ENCODE measurements at regions of chrX and their contacts with region 1.

Region 1: GRCh38 chrX:13167481-13168231 is 123.2 kb upstream of the FAM9C start:
- DNase-seq: peak; percentile 62
- H3K4me3 Mint-ChIP-seq: peak overlapping the region; percentile 56
- H3K27ac Mint-ChIP-seq: peak overlapping the region; percentile 79
- H3K4me1 Mint-ChIP-seq: peaks cover 19% of the 10 kb centered on the region
- H3K27me3 Mint-ChIP-seq: no peaks in the 10 kb centered on the region

Region 2: DNA sequence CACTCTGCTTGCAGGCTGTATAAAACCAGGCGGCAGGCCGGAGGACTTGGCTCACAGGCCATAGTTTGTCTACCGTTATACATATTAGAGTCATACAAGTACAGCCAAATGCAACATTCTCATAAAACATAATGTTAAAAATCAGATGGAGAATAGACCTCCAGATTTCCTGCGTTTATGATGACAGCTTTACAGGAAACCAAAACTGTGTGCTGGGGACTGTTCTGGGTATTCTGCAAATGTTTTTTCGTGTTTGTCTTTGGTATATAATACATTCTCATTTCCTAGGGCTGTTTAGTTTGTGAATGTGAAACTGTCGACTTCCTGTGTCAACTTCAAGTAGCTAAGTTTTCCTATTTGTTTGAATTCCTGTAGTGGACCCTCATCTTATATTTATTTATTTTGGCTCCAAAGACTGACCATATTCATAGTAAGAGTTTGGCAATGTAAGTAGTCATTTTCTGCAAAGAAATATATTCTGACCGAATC is 43.8 kb before region 1 on chrX:
- intact Hi-C with region 1: loop called (anchors 5 kb)
- DNase-seq: peak; percentile 67
- H3K4me3 Mint-ChIP-seq: peak overlapping the region; percentile 63
- H3K27ac Mint-ChIP-seq: peak overlapping the region; percentile 87
- H3K4me1 Mint-ChIP-seq: peaks cover 38% of the 10 kb centered on the region
- H3K27me3 Mint-ChIP-seq: no peaks in the 10 kb centered on the region

Region 3: DNA sequence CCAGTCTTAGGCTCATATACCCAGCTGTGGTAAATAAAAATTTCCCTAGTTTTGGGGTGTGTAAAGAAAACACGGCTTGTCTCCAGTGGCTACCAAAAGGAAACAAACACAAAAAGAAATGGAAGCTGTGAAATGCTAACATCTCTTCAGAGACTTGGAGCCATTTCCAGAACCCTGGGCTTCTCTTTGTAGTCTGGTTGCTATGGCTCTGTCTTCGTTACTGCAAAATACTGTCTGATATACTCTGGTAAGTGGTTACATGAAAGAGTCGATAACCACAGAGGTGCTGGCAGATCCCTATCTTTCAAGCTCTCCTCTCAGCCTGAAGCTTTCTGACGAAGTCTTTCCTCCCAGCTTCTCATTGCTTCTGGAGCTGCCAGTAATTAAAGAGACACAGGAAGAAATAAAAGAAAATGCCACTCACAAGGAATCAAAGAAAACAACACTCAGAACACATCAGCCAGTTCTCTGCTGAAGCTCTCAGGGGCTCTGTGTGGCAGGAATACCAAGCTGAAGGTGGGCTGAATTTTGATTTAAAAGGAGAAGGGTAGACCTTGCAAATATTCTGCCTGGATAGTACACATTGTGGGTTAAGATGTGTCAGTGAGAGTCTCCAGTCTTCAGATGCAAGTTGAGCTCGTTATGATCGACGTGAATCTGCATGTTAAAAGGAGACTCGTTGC is 15.7 kb before region 1 on chrX:
- intact Hi-C with region 1: loop called (anchors 1 kb)
- DNase-seq: peak; percentile 85
- H3K4me3 Mint-ChIP-seq: peak overlapping the region; percentile 50
- H3K27ac Mint-ChIP-seq: peak overlapping the region; percentile 82
- H3K4me1 Mint-ChIP-seq: peaks cover 11% of the 10 kb centered on the region
- H3K27me3 Mint-ChIP-seq: no peaks in the 10 kb centered on the region

Region 4: DNA sequence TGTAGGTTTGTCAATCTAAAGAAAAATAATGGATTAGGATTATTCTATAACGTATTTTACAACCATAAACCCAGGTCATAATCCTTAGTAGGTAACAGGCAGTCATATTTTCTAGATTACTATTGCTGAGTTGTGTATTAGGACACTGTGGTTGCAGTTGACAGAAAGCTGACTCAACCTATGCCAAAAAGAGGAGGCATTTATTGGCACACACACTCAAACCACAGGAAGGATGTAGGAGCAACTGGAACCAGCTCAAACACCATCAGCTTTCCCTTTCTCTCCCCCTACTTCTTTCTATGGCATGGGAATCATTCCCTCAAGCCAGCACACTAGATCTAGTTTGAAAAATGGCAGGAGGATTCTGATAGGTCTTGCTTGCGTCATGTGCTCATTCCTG is 13.2 kb after region 1 on chrX:
- intact Hi-C with region 1: no loop called
- DNase-seq: no peak
- H3K4me3 Mint-ChIP-seq: no peak overlapping the region
- H3K27ac Mint-ChIP-seq: no peak overlapping the region
- H3K4me1 Mint-ChIP-seq: peaks cover 4% of the 10 kb centered on the region
- H3K27me3 Mint-ChIP-seq: no peaks in the 10 kb centered on the region

Region 5: GRCh38 chrX:13257223-13258051 is 89.8 kb after region 1 on chrX:
- intact Hi-C with region 1: loop called (anchors 5 kb)
- DNase-seq: peak; percentile 60
- H3K4me3 Mint-ChIP-seq: peak overlapping the region; percentile 40
- H3K27ac Mint-ChIP-seq: peak overlapping the region; percentile 53
- H3K4me1 Mint-ChIP-seq: peaks cover 39% of the 10 kb centered on the region
- H3K27me3 Mint-ChIP-seq: no peaks in the 10 kb centered on the region